Activated CD4-positive, alpha-beta memory T cell treated with anti-CD3 and anti-CD28 coated beads for 36 hours (primary cell): ENCODE measurements at regions of chr7 and their contacts with region 1.

Region 1: GRCh38 chr7:30026229-30027064 is at the start of gene FKBP14:
- DNase-seq: peak; percentile 96
- H3K4me3 Mint-ChIP-seq: no peak within 1 kb of the TSS
- H3K27ac Mint-ChIP-seq: peak within 1 kb of the TSS; percentile 75
- H3K4me1 Mint-ChIP-seq: peaks cover 32% of the 10 kb centered on the region
- H3K27me3 Mint-ChIP-seq: no peaks in the 10 kb centered on the region
- total RNA-seq, gene FKBP14: 6.3 to 7.9 TPM

Region 2: GRCh38 chr7:30062591-30062990 is 36.1 kb after region 1 on chr7:
- CTCF ChIA-PET with region 1: interaction called, 16 read pairs
- POLR2A ChIA-PET with region 1: interaction called, 3 read pairs
- intact Hi-C with region 1: loop called (anchors 1 kb)
- DNase-seq: no peak
- H3K4me3 Mint-ChIP-seq: no peak overlapping the region
- H3K27ac Mint-ChIP-seq: no peak overlapping the region
- H3K4me1 Mint-ChIP-seq: no peaks in the 10 kb centered on the region
- H3K27me3 Mint-ChIP-seq: no peaks in the 10 kb centered on the region

Region 3: GRCh38 chr7:30322271-30323005 is 296.0 kb after region 1 on chr7:
- CTCF ChIA-PET with region 1: no interaction called
- POLR2A ChIA-PET with region 1: no interaction called
- intact Hi-C with region 1: loop called (anchors 5 kb)
- DNase-seq: no peak
- H3K4me3 Mint-ChIP-seq: peak overlapping the region; percentile 73
- H3K27ac Mint-ChIP-seq: peak overlapping the region; percentile 86
- H3K4me1 Mint-ChIP-seq: peaks cover 72% of the 10 kb centered on the region
- H3K27me3 Mint-ChIP-seq: no peaks in the 10 kb centered on the region

Region 4: GRCh38 chr7:30504347-30505173 is 478.1 kb after region 1 on chr7 and contains the start of gene GGCT:
- CTCF ChIA-PET with region 1: no interaction called
- POLR2A ChIA-PET with region 1: no interaction called
- intact Hi-C with region 1: loop called (anchors 2 kb)
- DNase-seq: peak; percentile 99
- H3K4me3 Mint-ChIP-seq: peak within 1 kb of the TSS; percentile 77
- H3K27ac Mint-ChIP-seq: peak within 1 kb of the TSS; percentile 79
- H3K4me1 Mint-ChIP-seq: peaks cover 38% of the 10 kb centered on the region
- H3K27me3 Mint-ChIP-seq: no peaks in the 10 kb centered on the region
- total RNA-seq, gene GGCT: 60.5 to 68.0 TPM